Panc1 (cell line): ENCODE measurements at regions of chr19 and their contacts with region 1.

Region 1: DNA sequence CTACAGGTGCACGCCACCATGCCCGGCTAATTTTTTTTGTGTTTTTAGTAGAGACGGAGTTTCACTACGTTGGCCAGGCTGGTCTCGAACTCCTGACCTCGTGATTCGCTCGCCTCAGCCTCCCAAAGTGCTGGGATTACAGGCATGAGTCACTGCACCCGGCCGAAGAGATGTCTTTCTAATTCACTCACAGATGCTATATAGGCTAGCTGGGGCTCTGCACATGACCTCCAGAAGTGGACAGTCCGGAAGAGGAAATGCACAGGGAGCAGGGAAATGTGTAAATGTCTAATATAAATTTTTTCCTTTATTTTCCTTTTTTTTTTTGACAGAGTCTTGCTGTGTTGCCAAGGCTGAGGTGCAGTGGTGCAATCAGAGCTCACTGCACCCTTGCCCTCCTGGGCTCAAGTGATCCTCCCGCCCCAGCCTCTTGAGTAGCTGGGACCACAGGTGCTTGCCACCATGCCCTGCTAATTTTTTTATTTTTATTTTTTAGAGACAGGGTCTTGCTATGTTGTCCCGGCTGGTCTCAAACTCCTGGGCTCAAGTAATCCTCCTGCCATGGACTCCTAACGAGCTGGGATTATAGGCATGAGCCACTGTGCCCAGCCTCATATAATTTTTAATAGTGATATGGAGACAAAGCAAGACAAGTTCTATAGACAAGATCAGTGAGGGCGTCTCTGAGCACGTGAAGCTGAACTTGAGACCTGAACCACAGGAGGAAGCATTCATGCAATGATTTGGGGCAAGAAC is 8.4 kb downstream of the GIPC1 start:
- DNase-seq: no peak
- ATAC-seq: no peak
- H3K4me3 ChIP-seq: no peak overlapping the region
- H3K27ac ChIP-seq: no peak overlapping the region
- H3K4me1 ChIP-seq: no peaks in the 10 kb centered on the region
- H3K27me3 ChIP-seq: no peaks in the 10 kb centered on the region
- CTCF ChIP-seq: no peak

Region 2: GRCh38 chr19:14556662-14557188 is 69.2 kb after region 1 on chr19:
- CTCF ChIA-PET with region 1: interaction called, 11 read pairs
- POLR2A ChIA-PET with region 1: no interaction called
- in situ Hi-C with region 1: no loop called
- intact Hi-C with region 1: no loop called
- DNase-seq: no peak
- ATAC-seq: peak; percentile 74
- H3K4me3 ChIP-seq: peak overlapping the region in 1 of 2 experiments; percentile 37; a peak in 2 of 4 replicates
- H3K27ac ChIP-seq: peak overlapping the region; percentile 72
- H3K4me1 ChIP-seq: peaks cover 63% of the 10 kb centered on the region
- H3K27me3 ChIP-seq: no peaks in the 10 kb centered on the region
- CTCF ChIP-seq: peak; percentile 94

Region 3: DNA sequence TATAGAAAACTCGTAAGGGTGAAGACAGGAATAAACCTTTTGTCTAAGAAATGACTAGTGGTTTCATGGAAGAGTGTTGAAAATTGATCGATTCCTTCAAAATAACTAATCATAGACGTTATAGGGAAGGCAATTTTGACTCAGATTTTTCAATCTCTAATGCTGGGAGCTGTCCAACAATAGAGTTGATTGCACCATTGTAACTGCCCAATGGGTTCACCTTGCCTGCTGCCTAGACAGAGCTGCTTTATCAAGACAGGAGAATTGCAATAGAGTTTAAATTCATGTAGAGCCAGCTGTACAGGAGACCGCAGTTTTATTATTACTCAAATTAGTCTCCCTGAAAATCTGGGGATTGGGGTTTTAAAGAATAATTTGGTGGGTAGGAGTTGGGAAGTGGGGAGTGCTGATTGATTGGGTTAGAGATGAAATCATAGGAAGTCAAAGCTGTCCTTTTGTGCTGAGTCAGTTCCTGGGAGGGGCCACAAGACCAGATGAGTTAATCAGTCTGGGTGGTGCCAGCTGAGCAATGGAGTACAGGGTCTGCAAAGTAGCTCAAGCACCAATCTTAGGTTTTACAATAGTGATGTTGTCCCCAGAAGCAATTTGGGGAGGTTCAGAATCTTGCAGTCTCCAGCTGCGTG is 307.7 kb after region 1 on chr19:
- CTCF ChIA-PET with region 1: no interaction called
- POLR2A ChIA-PET with region 1: no interaction called
- in situ Hi-C with region 1: no loop called
- intact Hi-C with region 1: no loop called
- DNase-seq: no peak
- ATAC-seq: no peak
- H3K4me3 ChIP-seq: no peak overlapping the region
- H3K27ac ChIP-seq: no peak overlapping the region
- H3K4me1 ChIP-seq: no peaks in the 10 kb centered on the region
- H3K27me3 ChIP-seq: no peaks in the 10 kb centered on the region
- CTCF ChIP-seq: no peak